ENCODE measurements at regions of chr11 and their contacts with region 1.

Region 1: DNA sequence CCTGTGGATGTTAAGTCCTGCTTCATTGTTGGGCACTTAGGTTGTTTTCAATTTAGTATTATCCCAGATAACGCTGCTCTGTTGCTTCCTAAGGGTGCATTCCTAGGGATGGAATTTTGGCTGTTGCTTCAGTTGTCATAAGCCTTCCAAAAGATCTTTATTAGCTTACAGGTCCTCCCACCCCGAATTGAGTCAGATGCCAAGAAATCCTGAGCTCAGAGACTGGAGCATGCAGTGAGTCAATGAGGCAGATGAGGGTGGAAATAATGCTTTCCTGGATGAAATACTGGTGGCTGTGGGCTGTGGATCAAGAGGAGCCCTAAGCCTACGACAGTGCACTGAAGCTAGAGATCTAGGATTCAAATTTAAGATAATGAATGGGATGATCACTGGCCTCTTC is 10.7 kb upstream of the IL18BP start:
- DNase-seq: no peak
- ATAC-seq: peak in 3 of 8 donors; percentile 24 to 45 (median 29)
- H3K4me3 ChIP-seq: no peak overlapping the region
- H3K27ac ChIP-seq: no peak overlapping the region
- H3K4me1 ChIP-seq: peaks cover 0 to 40% (median 3%) of the 10 kb centered on the region in 9 donors
- H3K27me3 ChIP-seq: no peaks in the 10 kb centered on the region
- CTCF ChIP-seq: no peak

Region 2: DNA sequence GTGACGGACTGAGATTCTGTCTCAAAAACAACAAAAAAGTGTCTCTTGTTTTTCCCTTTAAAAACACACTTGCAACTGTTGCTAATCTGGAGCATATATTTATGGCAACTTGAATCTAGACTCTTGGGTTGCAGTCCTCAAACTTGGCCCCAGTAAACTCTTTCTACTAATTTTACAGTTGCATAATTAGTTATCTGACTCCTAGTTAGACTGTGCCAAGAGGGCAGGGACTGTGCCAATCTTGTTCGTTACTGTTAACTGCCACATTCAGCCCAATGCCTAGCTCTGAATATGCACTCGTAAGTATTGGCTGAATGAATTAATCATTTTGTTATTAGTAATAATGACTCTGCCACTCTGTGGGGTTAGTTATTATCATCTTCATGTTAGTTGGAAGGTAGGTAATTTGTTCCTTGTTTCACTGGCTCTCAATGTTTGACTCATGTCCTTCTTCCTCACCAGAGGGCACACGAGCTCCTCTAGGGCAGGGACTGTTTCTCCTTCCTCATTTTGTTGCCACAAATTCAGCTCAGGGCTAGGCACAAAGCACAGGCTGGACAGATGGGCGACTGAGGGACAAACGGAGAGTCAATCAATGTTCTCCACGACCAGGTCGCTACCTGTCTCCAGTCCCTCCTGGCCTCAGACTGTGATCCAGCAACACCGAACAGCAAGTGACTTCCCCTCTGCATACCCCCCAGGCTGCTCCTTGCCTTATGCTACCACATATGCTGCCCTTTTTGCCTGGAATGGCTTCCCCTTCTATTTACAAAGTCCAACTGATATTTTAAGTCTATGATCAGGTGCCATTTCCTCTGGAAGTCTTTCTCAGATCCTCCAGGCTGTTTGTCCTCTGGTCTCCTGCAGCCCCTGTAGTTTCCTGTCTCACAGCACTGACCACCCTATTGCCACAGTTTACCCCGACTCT is 437.3 kb after region 1 on chr11:
- intact Hi-C with region 1: loop called in 1 of 10 experiments (anchors 10 kb)
- DNase-seq: peak in 1 of 2 donors; percentile 21
- ATAC-seq: peak in 5 of 8 donors; percentile 63 to 77 (median 71)
- H3K4me3 ChIP-seq: no peak overlapping the region
- H3K27ac ChIP-seq: peak overlapping the region in 2 of 10 donors; percentile 2 to 9
- H3K4me1 ChIP-seq: peaks cover 0 to 19% (median 9%) of the 10 kb centered on the region in 9 donors
- H3K27me3 ChIP-seq: no peaks in the 10 kb centered on the region
- CTCF ChIP-seq: peak in 1 of 9 donors; percentile 25

Region 3: GRCh38 chr11:72511393-72512047 is 523.5 kb after region 1 on chr11:
- intact Hi-C with region 1: no loop called
- DNase-seq: no peak
- ATAC-seq: no peak
- H3K4me3 ChIP-seq: no peak overlapping the region
- H3K27ac ChIP-seq: no peak overlapping the region
- H3K4me1 ChIP-seq: no peaks in the 10 kb centered on the region
- H3K27me3 ChIP-seq: no peaks in the 10 kb centered on the region
- CTCF ChIP-seq: no peak

Measured in heart right ventricle (tissue), 16 donors.